Right lobe of liver (tissue), 6 donors: ENCODE measurements at regions of chr15 and their contacts with region 1.

Region 1: GRCh38 chr15:94877833-94878232 is 646.5 kb downstream of the MCTP2 start:
- DNase-seq: no peak
- ATAC-seq: no peak
- H3K4me3 ChIP-seq: no peak overlapping the region
- H3K27ac ChIP-seq: no peak overlapping the region
- H3K4me1 ChIP-seq: no peaks in the 10 kb centered on the region
- H3K27me3 ChIP-seq: no peaks in the 10 kb centered on the region
- CTCF ChIP-seq: no peak
- POLR2A ChIP-seq: no peak

Region 2: GRCh38 chr15:94238539-94239118 is 639.2 kb before region 1 on chr15:
- intact Hi-C with region 1: no loop called
- DNase-seq: no peak
- ATAC-seq: no peak
- H3K4me3 ChIP-seq: no peak overlapping the region
- H3K27ac ChIP-seq: no peak overlapping the region
- H3K4me1 ChIP-seq: peaks cover 0 to 6% (median 0%) of the 10 kb centered on the region in 4 donors
- H3K27me3 ChIP-seq: no peaks in the 10 kb centered on the region
- CTCF ChIP-seq: no peak
- POLR2A ChIP-seq: no peak

Region 3: GRCh38 chr15:94930441-94930840 is 52.6 kb after region 1 on chr15:
- intact Hi-C with region 1: loop called in 1 of 2 experiments (anchors 10 kb)
- DNase-seq: no peak
- ATAC-seq: no peak
- H3K4me3 ChIP-seq: no peak overlapping the region
- H3K27ac ChIP-seq: no peak overlapping the region
- H3K4me1 ChIP-seq: no peaks in the 10 kb centered on the region
- H3K27me3 ChIP-seq: no peaks in the 10 kb centered on the region
- CTCF ChIP-seq: no peak
- POLR2A ChIP-seq: no peak

Region 4: DNA sequence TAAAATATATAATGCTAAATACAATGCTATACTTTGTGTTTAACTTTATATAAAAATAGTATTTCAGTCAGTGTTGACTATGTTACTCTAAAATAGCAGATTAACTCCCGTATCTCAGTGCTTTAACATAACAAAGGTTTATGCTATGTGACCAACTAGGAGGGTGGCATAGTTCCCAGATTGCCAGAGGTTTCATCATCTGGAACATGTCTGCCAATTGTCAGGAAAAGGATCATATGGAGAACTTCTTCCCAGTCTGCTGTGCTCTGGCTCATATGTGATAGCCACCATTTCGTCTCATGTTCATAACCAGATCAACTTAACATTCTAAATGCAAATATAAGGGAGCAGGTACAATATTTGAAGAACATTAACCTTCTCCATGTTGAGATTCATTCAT is 73.7 kb after region 1 on chr15:
- intact Hi-C with region 1: no loop called
- DNase-seq: no peak
- ATAC-seq: no peak
- H3K4me3 ChIP-seq: no peak overlapping the region
- H3K27ac ChIP-seq: no peak overlapping the region
- H3K4me1 ChIP-seq: no peaks in the 10 kb centered on the region
- H3K27me3 ChIP-seq: no peaks in the 10 kb centered on the region
- CTCF ChIP-seq: no peak
- POLR2A ChIP-seq: no peak